ENCODE measurements at regions of chr21 and their contacts with region 1.

Region 1: GRCh38 chr21:15408089-15408488 is 321.7 kb upstream of the USP25 start:
- DNase-seq: no peak
- ATAC-seq: no peak
- H3K4me3 ChIP-seq: no peak overlapping the region
- H3K27ac ChIP-seq: no peak overlapping the region
- H3K4me1 ChIP-seq: no peaks in the 10 kb centered on the region
- H3K27me3 ChIP-seq: no peaks in the 10 kb centered on the region

Region 2: DNA sequence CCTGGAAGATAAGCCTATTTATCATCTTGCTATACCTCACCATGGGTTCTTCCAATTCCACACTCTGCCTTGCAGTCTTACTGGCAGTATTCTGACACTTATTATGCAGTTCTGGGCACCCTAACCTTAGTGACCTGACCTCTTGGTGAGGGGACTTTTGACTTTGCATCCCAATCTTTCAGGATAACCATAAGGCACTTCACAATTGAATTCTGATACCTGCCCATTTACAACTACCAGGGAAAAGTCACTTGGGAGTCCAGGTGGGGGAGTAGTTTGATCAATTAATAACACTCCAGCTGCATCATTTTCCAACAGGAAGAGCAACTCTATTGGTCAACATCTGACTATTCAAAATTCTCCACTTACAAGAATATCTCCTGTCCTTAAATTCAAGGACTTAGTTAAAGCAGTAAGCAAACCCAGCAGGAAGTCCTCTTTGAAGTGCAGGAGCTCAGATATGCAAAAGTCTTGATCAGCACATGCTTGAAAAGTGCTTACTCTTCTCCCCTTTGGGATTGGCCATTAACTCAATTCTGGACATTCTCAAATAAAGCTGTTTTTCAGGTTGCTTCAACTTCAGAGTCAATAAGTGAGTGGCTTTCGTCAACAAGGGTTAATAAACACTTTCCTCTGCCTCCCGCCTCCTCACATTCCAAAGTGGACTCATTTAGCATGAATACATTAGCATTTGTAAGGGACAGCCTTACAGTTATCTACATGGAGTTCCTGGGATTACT is 165.9 kb before region 1 on chr21:
- intact Hi-C with region 1: no loop called
- DNase-seq: no peak
- ATAC-seq: no peak
- H3K4me3 ChIP-seq: no peak overlapping the region
- H3K27ac ChIP-seq: no peak overlapping the region
- H3K4me1 ChIP-seq: no peaks in the 10 kb centered on the region
- H3K27me3 ChIP-seq: no peaks in the 10 kb centered on the region

Region 3: GRCh38 chr21:15468368-15468767 is 60.3 kb after region 1 on chr21:
- intact Hi-C with region 1: loop called in 1 of 4 experiments (anchors 10 kb)
- DNase-seq: no peak
- ATAC-seq: no peak
- H3K4me3 ChIP-seq: no peak overlapping the region
- H3K27ac ChIP-seq: no peak overlapping the region
- H3K4me1 ChIP-seq: no peaks in the 10 kb centered on the region
- H3K27me3 ChIP-seq: no peaks in the 10 kb centered on the region